ENCODE measurements at regions of chr12 and their contacts with region 1.

Region 1: DNA sequence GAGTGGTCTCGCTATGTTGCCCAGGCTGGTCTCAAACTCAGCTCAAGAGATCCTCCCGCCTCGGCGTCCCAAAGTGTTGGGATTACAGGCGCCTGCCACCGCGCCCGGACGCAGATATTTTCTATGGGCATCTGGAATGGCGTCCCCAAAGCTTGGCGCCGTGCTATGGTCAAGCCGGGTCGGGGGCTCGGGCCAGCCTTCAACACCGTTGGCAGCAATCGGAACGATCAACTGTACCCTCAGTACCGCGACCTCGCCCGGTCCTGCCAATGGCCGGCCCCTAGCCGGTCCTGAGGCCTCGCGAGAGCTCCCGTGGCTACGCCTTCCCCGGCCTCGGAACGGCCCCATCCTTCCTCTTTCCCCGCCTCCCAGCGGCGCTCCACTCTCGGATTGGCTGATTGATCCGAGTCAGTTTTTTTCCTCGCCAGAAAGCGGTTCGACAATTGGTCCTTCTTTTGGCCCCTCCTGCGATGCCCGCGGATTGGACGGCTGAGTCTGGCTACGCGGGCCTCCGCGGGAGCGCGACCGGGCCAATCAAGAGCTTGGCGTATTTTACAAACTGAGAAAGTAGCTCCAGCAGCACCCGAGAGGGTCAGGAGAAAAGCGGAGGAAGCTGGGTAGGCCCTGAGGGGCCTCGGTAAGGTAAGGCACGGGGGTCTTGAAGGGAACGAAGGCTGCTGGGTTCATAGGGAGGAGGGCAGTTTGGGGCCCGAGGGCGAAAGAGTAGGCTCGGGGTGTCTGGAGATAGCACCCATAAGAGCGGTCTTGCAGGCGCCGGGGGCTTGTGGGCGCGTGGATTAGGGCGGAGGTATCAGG is at the start of gene TROAP:
- DNase-seq: peak; percentile 93 to 99 (median 96)
- ATAC-seq: peak; percentile 96
- H3K4me3 ChIP-seq: peak within 1 kb of the TSS; percentile 71 to 83
- H3K4me3 Mint-ChIP-seq: peak within 1 kb of the TSS; percentile 89
- H3K27ac ChIP-seq: peak within 1 kb of the TSS; percentile 48 to 60
- H3K27ac Mint-ChIP-seq: peak within 1 kb of the TSS; percentile 81
- H3K4me1 ChIP-seq: peaks cover 12% of the 10 kb centered on the region
- H3K4me1 Mint-ChIP-seq: peaks cover 20% of the 10 kb centered on the region
- H3K27me3 ChIP-seq: no peaks in the 10 kb centered on the region
- H3K27me3 Mint-ChIP-seq: no peaks in the 10 kb centered on the region
- CTCF ChIP-seq: no peak
- total RNA-seq, gene TROAP: 0.49 to 0.72 TPM

Region 2: GRCh38 chr12:49264738-49265515 is 58.0 kb before region 1 on chr12 and contains the start of gene TUBA1C:
- CTCF ChIA-PET with region 1: interaction called, 3 read pairs
- POLR2A ChIA-PET with region 1: no interaction called
- intact Hi-C with region 1: loop called in 1 of 2 experiments (anchors 1 kb)
- DNase-seq: peak; percentile 65 to 91 (median 84)
- ATAC-seq: peak; percentile 87
- H3K4me3 ChIP-seq: peak within 1 kb of the TSS; percentile 89 to 92
- H3K4me3 Mint-ChIP-seq: peak within 1 kb of the TSS; percentile 92
- H3K27ac ChIP-seq: peak within 1 kb of the TSS; percentile 75 to 84
- H3K27ac Mint-ChIP-seq: peak within 1 kb of the TSS; percentile 90
- H3K4me1 ChIP-seq: peaks cover 10% of the 10 kb centered on the region
- H3K4me1 Mint-ChIP-seq: peaks cover 25% of the 10 kb centered on the region
- H3K27me3 ChIP-seq: no peaks in the 10 kb centered on the region
- H3K27me3 Mint-ChIP-seq: no peaks in the 10 kb centered on the region
- CTCF ChIP-seq: no peak
- total RNA-seq, gene TUBA1C: 25.5 to 30.7 TPM

Region 3: DNA sequence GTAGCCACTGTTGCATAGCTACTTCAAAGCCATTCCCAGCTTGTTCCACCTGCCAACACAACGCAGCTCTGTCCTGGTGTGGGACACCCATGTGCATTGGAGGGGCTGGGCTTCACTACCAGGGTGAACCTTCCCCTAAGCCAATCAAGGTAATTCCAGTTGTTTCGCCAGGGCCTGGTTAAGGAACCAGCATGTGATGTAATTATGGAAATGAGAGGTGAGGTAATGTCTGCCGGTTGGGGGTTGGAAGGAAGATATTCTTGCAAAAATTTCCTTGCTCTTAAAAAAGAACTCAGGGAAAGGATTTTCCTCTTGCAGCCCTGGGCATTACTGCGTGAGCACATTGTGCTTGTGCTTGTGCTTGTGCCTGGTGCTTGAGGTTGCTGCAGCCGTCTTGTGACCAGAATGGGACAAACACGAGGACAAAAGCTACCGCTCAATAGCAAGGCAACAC is 43.2 kb before region 1 on chr12:
- CTCF ChIA-PET with region 1: no interaction called
- POLR2A ChIA-PET with region 1: no interaction called
- intact Hi-C with region 1: no loop called
- DNase-seq: no peak
- ATAC-seq: no peak
- H3K4me3 ChIP-seq: no peak overlapping the region
- H3K4me3 Mint-ChIP-seq: no peak overlapping the region
- H3K27ac ChIP-seq: no peak overlapping the region
- H3K27ac Mint-ChIP-seq: no peak overlapping the region
- H3K4me1 ChIP-seq: no peaks in the 10 kb centered on the region
- H3K4me1 Mint-ChIP-seq: no peaks in the 10 kb centered on the region
- H3K27me3 ChIP-seq: no peaks in the 10 kb centered on the region
- H3K27me3 Mint-ChIP-seq: peaks cover 12% of the 10 kb centered on the region
- CTCF ChIP-seq: no peak

Region 4: GRCh38 chr12:49336645-49337584 is 14.0 kb after region 1 on chr12 and contains the start of gene C1QL4:
- CTCF ChIA-PET with region 1: interaction called, 23 read pairs
- POLR2A ChIA-PET with region 1: interaction called, 11 read pairs
- intact Hi-C with region 1: loop called in 1 of 2 experiments (anchors 1 kb)
- DNase-seq: peak; percentile 79 to 94 (median 89)
- ATAC-seq: peak; percentile 97
- H3K4me3 ChIP-seq: peak within 1 kb of the TSS; percentile 47 to 51
- H3K4me3 Mint-ChIP-seq: peak within 1 kb of the TSS; percentile 75
- H3K27ac ChIP-seq: no peak within 1 kb of the TSS
- H3K27ac Mint-ChIP-seq: no peak within 1 kb of the TSS
- H3K4me1 ChIP-seq: peaks cover 8% of the 10 kb centered on the region
- H3K4me1 Mint-ChIP-seq: peaks cover 26% of the 10 kb centered on the region
- H3K27me3 ChIP-seq: peaks cover 18 to 36% of the 10 kb centered on the region in 2 experiments
- H3K27me3 Mint-ChIP-seq: peaks cover 51% of the 10 kb centered on the region
- CTCF ChIP-seq: peak; percentile 91
- total RNA-seq, gene C1QL4: not detected

Region 5: GRCh38 chr12:49342066-49342913 is 19.4 kb after region 1 on chr12:
- CTCF ChIA-PET with region 1: interaction called, 23 read pairs
- POLR2A ChIA-PET with region 1: interaction called, 11 read pairs
- intact Hi-C with region 1: loop called in 1 of 2 experiments (anchors 1 kb)
- DNase-seq: peak; percentile 39 to 84 (median 74)
- ATAC-seq: peak; percentile 66
- H3K4me3 ChIP-seq: peak overlapping the region; percentile 45 to 52
- H3K4me3 Mint-ChIP-seq: peak overlapping the region; percentile 73
- H3K27ac ChIP-seq: no peak overlapping the region
- H3K27ac Mint-ChIP-seq: no peak overlapping the region
- H3K4me1 ChIP-seq: peaks cover 43% of the 10 kb centered on the region
- H3K4me1 Mint-ChIP-seq: peaks cover 45% of the 10 kb centered on the region
- H3K27me3 ChIP-seq: peaks cover 22 to 55% of the 10 kb centered on the region in 2 experiments
- H3K27me3 Mint-ChIP-seq: peaks cover 42% of the 10 kb centered on the region
- CTCF ChIP-seq: peak; percentile 88

Measured in CD8-positive, alpha-beta T cell (primary cell).